OCI-LY7 (cell line): ENCODE measurements at regions of chr16 and their contacts with region 1.

Region 1: GRCh38 chr16:21554795-21555585 is 44.4 kb upstream of the METTL9 start:
- DNase-seq: peak; percentile 100
- H3K4me3 ChIP-seq: peak overlapping the region; percentile 34
- H3K27ac ChIP-seq: peak overlapping the region; percentile 74
- H3K4me1 ChIP-seq: peaks cover 26% of the 10 kb centered on the region
- CTCF ChIP-seq: peak; percentile 99

Region 2: GRCh38 chr16:21158208-21159110 is 396.5 kb before region 1 on chr16 and contains the start of gene LDAF1:
- CTCF ChIA-PET with region 1: no interaction called
- POLR2A ChIA-PET with region 1: no interaction called
- intact Hi-C with region 1: loop called (anchors 1 kb)
- DNase-seq: peak; percentile 85
- H3K4me3 ChIP-seq: peak within 1 kb of the TSS; percentile 80
- H3K27ac ChIP-seq: peak within 1 kb of the TSS; percentile 40
- H3K4me1 ChIP-seq: peaks cover 17% of the 10 kb centered on the region
- CTCF ChIP-seq: no peak
- total RNA-seq, gene LDAF1: 5.4 and 5.8 TPM in 2 replicates

Region 3: DNA sequence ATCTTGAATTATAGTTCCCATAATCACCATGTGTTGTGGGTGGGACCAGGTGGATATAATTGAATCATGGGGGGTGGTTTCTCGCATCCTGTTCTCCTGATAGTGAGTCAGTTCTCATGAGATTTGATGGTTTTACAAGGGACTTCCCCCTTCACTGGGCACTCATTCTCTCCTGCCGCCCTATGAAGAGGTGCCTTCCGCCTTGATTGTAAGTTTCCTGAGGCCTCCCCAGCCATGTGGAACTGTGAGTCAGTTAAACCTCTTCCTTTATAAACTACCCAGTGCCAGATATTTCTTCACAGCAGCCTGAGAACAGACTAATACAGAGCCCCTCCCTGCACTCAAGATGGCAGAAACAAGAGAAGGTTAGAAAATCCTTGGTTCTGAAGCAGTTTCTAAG is 370.2 kb before region 1 on chr16:
- CTCF ChIA-PET with region 1: no interaction called
- POLR2A ChIA-PET with region 1: no interaction called
- intact Hi-C with region 1: loop called (anchors 2 kb)
- DNase-seq: no peak
- H3K4me3 ChIP-seq: no peak overlapping the region
- H3K27ac ChIP-seq: no peak overlapping the region
- H3K4me1 ChIP-seq: no peaks in the 10 kb centered on the region
- CTCF ChIP-seq: no peak

Region 4: GRCh38 chr16:21277927-21278706 is 276.9 kb before region 1 on chr16 and contains the start of gene CRYM:
- CTCF ChIA-PET with region 1: no interaction called
- POLR2A ChIA-PET with region 1: no interaction called
- intact Hi-C with region 1: loop called (anchors 10 kb)
- DNase-seq: peak; percentile 76
- H3K4me3 ChIP-seq: peak within 1 kb of the TSS; percentile 54
- H3K27ac ChIP-seq: no peak within 1 kb of the TSS
- H3K4me1 ChIP-seq: peaks cover 23% of the 10 kb centered on the region
- CTCF ChIP-seq: peak; percentile 89
- total RNA-seq, gene CRYM: 0.18 and 0.28 TPM in 2 replicates

Region 5: DNA sequence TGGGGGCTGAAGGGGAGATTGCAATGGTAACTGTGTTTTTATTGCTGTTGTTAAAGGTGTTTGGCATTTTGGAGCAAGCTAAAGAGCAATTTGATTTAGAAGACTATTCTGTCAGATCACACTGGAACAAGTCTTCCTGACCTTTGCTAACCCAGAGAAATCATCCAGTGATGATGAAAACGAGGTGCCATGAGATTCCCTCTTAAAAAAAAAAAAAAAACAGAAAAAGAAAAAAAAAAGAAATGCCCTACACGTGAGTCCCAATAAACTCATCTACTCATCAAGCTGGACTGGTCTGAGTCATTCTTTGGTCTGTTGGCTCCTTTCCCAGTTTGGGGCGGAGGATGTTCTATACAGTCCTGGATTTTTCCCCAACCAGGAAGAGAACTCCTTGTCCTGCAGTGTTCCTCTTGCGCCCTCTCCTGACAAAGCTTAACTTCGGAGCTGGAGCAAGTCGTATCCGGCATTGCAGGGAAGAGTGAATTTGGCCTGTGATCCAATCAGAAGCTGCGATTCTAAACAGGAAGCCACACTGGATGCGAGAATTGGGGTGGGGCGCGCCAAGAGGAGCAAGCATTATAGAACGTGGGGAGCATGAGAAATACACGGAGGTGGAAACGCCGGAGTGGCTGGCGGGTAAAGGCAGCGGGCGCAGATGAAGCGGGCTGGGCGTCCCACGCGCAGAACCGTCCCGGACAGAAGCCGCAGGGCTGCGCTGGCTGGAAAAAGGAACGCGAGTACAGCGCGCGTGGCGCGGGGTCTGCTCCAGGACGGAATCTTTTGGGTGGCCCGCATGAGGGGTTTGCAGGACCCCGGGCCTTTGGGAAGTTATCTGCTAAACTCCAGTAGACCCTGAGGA is 254.5 kb before region 1 on chr16:
- CTCF ChIA-PET with region 1: no interaction called
- POLR2A ChIA-PET with region 1: interaction called, 3 read pairs
- intact Hi-C with region 1: loop called (anchors 10 kb)
- DNase-seq: peak; percentile 87
- H3K4me3 ChIP-seq: peak overlapping the region; percentile 81
- H3K27ac ChIP-seq: peak overlapping the region; percentile 69
- H3K4me1 ChIP-seq: peaks cover 25% of the 10 kb centered on the region
- CTCF ChIP-seq: peak; percentile 91

Region 6: GRCh38 chr16:21523411-21524067 is 31.5 kb before region 1 on chr16:
- CTCF ChIA-PET with region 1: no interaction called
- POLR2A ChIA-PET with region 1: interaction called, 8 read pairs
- intact Hi-C with region 1: loop called (anchors 1 kb)
- DNase-seq: no peak
- H3K4me3 ChIP-seq: no peak overlapping the region
- H3K27ac ChIP-seq: no peak overlapping the region
- H3K4me1 ChIP-seq: peaks cover 20% of the 10 kb centered on the region
- CTCF ChIP-seq: no peak

Region 7: GRCh38 chr16:22948603-22949368 is 1393.8 kb after region 1 on chr16:
- CTCF ChIA-PET with region 1: no interaction called
- POLR2A ChIA-PET with region 1: no interaction called
- intact Hi-C with region 1: loop called (anchors 1 kb)
- DNase-seq: peak; percentile 65
- H3K4me3 ChIP-seq: no peak overlapping the region
- H3K27ac ChIP-seq: no peak overlapping the region
- H3K4me1 ChIP-seq: no peaks in the 10 kb centered on the region
- CTCF ChIP-seq: peak; percentile 92